Activated CD8-positive, alpha-beta T cell treated with anti-CD3 and anti-CD28 coated beads for 36 hours (primary cell): ENCODE measurements at regions of chr2 and their contacts with region 1.

Region 1: GRCh38 chr2:109545828-109546713 is 67.7 kb downstream of the SEPTIN10 start:
- DNase-seq: peak; percentile 76
- ATAC-seq: peak; percentile 96
- H3K4me3 Mint-ChIP-seq: no peak overlapping the region
- H3K27ac Mint-ChIP-seq: no peak overlapping the region
- H3K4me1 Mint-ChIP-seq: peaks cover 7% of the 10 kb centered on the region
- H3K27me3 Mint-ChIP-seq: peaks cover 8% of the 10 kb centered on the region
- CTCF ChIP-seq: peak; percentile 88

Region 2: DNA sequence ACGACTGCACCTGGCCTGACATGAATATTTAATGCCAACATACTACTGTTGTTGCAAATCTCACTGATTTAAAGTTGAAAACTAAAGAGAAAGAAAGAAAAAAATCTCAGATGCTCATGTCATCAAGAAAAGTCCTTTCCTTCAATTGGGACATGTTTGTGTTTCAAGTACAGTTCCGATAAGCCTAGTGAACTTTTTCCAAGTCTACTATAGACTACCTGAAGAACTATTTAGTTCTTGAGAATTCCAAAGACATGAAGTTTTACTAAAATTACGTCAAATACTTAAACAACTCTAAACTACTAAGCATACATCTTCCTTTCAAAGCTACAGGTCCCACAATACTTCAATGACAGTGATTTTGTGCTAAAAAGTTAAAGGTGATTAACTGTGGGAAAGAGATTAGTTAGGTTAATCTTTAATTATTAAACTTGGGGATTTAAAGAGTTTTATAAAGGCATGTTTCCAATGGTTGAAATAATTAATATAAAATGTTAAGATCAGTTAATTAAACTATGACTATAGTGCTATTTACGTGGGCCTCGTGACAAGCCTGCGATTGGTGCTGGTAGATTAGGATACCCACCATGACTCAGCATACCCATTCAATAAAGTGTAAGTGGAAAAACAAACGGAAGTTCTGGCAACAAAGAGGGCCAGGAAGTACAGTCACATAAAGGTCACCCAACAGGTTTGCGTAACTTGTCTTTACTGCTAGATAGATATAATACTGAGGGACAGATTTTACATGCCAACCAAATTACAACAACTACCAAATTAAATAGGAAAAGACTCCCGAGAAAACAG is 12.2 kb after region 1 on chr2:
- CTCF ChIA-PET with region 1: interaction called, 33 read pairs
- POLR2A ChIA-PET with region 1: no interaction called
- intact Hi-C with region 1: no loop called
- DNase-seq: peak; percentile 35
- ATAC-seq: peak; percentile 68
- H3K4me3 Mint-ChIP-seq: no peak overlapping the region
- H3K27ac Mint-ChIP-seq: peak overlapping the region; percentile 26
- H3K4me1 Mint-ChIP-seq: peaks cover 10% of the 10 kb centered on the region
- H3K27me3 Mint-ChIP-seq: peaks cover 1% of the 10 kb centered on the region
- CTCF ChIP-seq: no peak

Region 3: DNA sequence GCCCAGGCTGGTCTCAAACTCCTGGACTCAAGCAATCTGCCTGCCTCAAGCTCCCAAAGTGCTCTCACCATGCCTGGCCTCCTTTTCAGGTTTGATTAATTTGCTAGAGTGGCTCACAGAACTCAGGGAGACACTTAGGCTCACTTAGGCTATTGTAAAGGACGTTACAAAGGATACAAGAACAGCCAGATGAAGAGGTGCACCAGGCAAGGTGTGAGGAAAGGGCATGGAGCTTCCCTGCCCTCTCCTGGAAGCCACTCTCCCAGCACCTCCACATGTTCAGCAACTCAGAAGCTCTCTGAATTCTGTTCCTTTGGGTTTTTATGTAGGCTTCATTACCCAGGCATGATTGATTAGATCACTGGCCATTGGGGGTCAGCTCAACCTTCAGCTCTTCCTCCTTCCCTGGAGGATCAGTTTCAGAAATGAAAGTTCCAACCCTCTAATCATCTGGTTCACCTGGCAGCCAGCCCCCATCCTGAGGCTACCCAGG is 169.3 kb after region 1 on chr2:
- CTCF ChIA-PET with region 1: interaction called, 12 read pairs
- POLR2A ChIA-PET with region 1: no interaction called
- intact Hi-C with region 1: no loop called
- DNase-seq: no peak
- ATAC-seq: no peak
- H3K4me3 Mint-ChIP-seq: no peak overlapping the region
- H3K27ac Mint-ChIP-seq: no peak overlapping the region
- H3K4me1 Mint-ChIP-seq: no peaks in the 10 kb centered on the region
- H3K27me3 Mint-ChIP-seq: peaks cover 4% of the 10 kb centered on the region
- CTCF ChIP-seq: no peak

Region 4: DNA sequence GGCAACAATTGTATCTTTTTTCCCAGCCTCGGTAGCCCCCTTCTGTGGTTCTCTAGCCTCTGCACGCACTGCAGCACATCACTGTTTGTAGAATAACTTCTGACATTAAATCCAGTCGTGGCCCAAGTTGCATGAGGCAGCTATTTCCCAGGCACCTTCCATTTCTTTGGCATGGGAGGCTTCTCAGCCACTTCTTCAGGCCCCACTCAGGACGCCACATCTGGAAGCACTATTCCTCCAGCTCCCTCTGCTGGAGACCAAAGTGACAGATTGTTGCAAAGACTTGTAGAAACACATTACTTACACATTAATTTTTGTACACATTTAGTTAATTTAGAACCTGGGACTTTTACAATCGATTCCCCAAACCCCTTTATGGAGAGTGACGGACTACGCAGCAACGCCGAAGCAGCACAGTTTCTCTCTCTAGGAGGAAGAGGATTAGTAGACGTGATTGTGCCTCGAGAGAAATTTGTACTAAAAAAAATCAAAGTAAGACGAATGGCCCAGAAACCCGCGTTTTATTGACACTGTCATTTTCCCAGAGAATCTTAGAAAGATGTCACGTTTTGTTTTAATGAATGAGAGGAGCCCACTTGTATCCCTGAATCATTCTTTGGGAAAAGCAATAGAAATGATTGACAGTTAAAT is 190.2 kb after region 1 on chr2:
- CTCF ChIA-PET with region 1: interaction called, 30 read pairs
- POLR2A ChIA-PET with region 1: no interaction called
- intact Hi-C with region 1: no loop called
- DNase-seq: peak; percentile 35
- ATAC-seq: no peak
- H3K4me3 Mint-ChIP-seq: no peak overlapping the region
- H3K27ac Mint-ChIP-seq: no peak overlapping the region
- H3K4me1 Mint-ChIP-seq: no peaks in the 10 kb centered on the region
- H3K27me3 Mint-ChIP-seq: peaks cover 18% of the 10 kb centered on the region
- CTCF ChIP-seq: peak; percentile 55